ENCODE measurements at regions of chr22 and their contacts with region 1.

Region 1: GRCh38 chr22:37538590-37539357 is 19.6 kb upstream of the CARD10 start:
- DNase-seq: peak; percentile 97

Region 2: DNA sequence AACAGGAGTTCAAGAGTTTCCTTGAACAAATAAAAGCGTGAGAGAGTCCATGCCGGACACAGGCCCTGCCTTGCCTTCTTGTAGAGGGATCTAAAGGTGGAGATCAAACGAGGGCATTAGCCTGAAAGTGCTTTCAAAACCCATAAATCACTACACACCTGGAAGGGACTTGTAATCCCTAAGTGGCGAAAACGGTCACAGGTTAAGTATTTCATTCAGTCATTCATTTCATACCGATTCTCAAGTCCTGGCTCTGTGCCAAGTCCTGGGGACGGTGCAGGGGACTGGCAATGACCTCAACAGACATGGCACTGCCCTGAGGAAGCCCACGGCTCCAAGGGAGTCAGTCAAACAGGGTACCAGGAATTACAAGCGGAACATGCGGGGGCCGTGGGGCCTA is 138.1 kb before region 1 on chr22:
- intact Hi-C with region 1: no loop called
- DNase-seq: no peak

Region 3: GRCh38 chr22:37566903-37567820 is 28.4 kb after region 1 on chr22:
- intact Hi-C with region 1: loop called (anchors 2 kb)
- DNase-seq: peak; percentile 95

Region 4: DNA sequence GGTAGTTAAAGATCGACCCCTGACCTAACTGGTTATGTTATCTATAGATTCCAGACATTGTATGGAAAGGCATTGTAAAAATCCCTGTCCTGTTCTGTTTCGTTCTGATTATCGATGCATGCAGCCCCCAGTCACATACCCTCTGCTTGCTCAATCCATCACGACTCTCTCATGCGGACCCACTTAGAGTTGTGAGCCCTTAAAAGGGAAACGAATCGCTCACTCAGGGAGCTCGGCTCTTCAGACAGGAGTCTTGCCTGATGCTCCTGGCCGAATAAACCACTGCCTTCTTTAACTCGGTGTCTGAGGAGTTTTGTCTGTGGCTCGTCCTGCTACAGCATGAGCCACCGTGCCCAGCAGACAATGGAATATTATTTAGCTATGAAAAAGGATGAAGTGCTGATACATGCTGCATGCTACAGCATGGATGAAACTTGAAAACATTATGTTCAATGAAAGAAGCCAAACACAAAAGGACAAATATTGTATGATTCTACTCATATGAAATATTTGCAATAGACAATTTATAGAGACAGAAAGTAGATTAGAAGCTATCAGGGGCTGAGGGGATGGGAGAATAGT is 53.1 kb after region 1 on chr22:
- intact Hi-C with region 1: loop called (anchors 1 kb)
- DNase-seq: no peak